CD4-positive, alpha-beta T cell (primary cell): ENCODE measurements at regions of chr3 and their contacts with region 1.

Region 1: DNA sequence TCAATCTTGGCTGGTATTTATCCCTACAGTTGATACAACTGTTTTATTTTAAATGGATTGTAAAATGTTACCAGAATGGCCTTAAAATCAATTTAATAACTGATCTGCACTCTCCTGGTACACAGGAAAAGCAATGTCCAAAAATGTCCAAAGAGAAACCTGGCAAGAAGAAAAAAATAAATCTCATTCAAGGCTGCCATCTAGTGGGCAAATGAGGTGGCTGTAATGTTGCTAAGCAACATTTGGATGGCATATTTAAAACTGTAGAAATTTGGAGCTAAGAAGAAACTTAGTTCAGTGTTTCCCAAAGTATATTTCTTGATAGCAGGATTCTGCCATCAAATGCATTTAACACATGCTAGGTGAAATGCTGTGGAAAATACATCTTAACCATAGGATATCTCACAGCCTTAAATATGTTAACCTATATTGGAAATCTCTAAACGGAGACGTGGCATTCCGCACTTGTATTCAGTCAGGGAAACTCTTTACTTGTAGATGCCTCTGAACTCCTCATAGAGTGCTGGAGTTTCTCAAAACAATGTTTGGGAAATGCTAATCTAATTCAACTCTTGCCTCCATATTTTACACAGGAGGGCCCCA is 216.8 kb downstream of the ERC2 start:
- DNase-seq: peak in 4 of 14 experiments; percentile 5 to 35 (median 14)
- ATAC-seq: no peak
- H3K4me3 ChIP-seq: no peak overlapping the region
- H3K4me3 Mint-ChIP-seq: no peak overlapping the region
- H3K27ac ChIP-seq: no peak overlapping the region
- H3K27ac Mint-ChIP-seq: no peak overlapping the region
- H3K4me1 ChIP-seq: no peaks in the 10 kb centered on the region
- H3K4me1 Mint-ChIP-seq: no peaks in the 10 kb centered on the region
- H3K27me3 ChIP-seq: no peaks in the 10 kb centered on the region
- H3K27me3 Mint-ChIP-seq: peaks cover 6% of the 10 kb centered on the region
- CTCF ChIP-seq: peak; percentile 76

Region 2: DNA sequence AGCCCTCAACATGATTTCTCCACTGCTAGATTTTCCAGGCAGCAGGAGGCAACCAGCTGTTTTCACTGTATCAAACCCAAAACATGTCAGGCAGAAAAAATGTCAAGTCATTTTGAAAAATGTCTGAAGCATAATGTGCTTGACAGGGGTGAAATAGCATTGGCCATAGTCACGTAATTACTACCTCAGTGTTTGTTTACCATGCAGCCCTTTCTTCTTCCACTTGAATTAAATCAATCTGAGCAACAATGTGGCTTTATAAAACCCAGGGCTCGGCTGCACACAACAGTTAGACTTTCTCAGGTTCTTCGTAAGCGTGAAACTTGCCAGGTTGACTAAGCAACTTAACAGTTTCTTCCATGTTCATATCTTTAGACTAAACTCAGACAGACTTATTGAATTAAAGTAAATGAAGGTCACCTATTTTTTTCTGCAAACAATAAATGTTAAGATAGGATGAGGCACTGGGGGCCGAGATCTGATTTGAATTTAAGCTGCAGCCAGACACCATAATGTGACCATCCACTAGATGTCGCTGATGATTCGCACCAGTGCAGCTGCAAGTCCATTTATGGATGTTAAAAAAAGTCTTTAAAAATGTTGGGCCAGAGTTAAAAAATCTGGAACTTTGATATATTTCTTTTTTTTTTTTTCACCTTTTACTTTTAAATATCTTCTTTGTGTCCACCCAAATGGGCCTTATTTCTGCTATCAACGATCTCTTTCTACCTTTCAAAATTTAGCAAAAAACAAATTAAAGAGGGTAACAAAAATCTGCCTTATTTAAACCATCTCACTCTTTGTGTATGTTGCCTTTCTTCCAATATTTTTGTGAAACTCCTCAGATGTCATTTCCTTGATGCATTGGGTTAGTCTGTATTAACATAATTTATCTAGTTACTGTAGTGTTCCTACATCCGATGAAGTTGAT is 1823.2 kb before region 1 on chr3:
- CTCF ChIA-PET with region 1: no interaction called
- POLR2A ChIA-PET with region 1: no interaction called
- intact Hi-C with region 1: loop called in 1 of 2 experiments (anchors 5 kb)
- DNase-seq: peak in 4 of 14 experiments; percentile 11 to 38 (median 23)
- ATAC-seq: no peak
- H3K4me3 ChIP-seq: no peak overlapping the region
- H3K4me3 Mint-ChIP-seq: no peak overlapping the region
- H3K27ac ChIP-seq: no peak overlapping the region
- H3K27ac Mint-ChIP-seq: no peak overlapping the region
- H3K4me1 ChIP-seq: no peaks in the 10 kb centered on the region
- H3K4me1 Mint-ChIP-seq: no peaks in the 10 kb centered on the region
- H3K27me3 ChIP-seq: no peaks in the 10 kb centered on the region
- H3K27me3 Mint-ChIP-seq: peaks cover 10% of the 10 kb centered on the region
- CTCF ChIP-seq: peak; percentile 50

Region 3: DNA sequence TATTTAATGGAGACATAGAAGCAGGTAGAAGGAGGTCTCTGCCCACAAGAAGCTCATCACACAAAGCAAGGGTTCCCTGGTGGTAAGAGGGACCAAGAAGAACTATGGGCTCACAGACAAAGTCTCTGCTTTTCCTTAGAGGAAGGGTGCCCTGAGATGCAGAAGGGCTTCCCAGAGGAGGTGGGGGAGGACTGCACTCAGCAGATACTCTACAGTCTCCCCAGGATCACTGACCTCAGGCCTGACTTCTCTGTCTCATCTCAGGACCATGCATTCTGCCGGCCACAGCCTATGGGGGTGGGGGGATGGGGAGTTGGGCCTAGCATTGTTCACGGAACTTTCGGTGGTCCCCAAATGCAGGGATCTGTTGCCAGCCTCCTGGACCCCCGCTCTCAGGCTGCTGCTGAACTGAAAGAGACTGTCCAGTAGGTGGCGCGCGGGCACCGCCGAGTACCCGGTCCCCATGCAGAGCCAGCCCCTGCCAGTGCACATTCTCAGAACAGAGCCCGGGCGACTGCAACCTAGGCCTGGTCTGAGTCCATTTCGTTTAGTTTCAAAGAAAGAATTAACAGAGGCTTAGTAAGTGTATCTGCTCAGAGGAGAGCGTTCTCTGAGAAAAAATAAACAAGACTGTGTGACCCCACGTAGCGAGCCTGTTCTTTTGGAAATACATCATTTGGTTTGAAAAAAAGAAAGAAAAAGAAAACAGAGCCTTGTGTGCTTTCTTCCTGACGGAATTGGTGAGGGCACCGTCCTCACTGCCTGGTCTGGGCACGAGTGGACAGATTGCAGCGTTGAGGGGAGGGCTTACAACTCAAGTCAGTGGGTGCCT is 1397.7 kb before region 1 on chr3:
- CTCF ChIA-PET with region 1: no interaction called
- POLR2A ChIA-PET with region 1: no interaction called
- intact Hi-C with region 1: loop called in 1 of 2 experiments (anchors 5 kb)
- DNase-seq: peak in 8 of 14 experiments; percentile 1 to 40 (median 16)
- ATAC-seq: no peak
- H3K4me3 ChIP-seq: no peak overlapping the region
- H3K4me3 Mint-ChIP-seq: no peak overlapping the region
- H3K27ac ChIP-seq: no peak overlapping the region
- H3K27ac Mint-ChIP-seq: no peak overlapping the region
- H3K4me1 ChIP-seq: no peaks in the 10 kb centered on the region
- H3K4me1 Mint-ChIP-seq: no peaks in the 10 kb centered on the region
- H3K27me3 ChIP-seq: peaks cover 0 to 3% of the 10 kb centered on the region in 2 experiments
- H3K27me3 Mint-ChIP-seq: peaks cover 18% of the 10 kb centered on the region
- CTCF ChIP-seq: peak; percentile 41

Region 4: GRCh38 chr3:55485211-55485791 is 766.1 kb before region 1 on chr3:
- CTCF ChIA-PET with region 1: no interaction called
- POLR2A ChIA-PET with region 1: no interaction called
- intact Hi-C with region 1: loop called in 1 of 2 experiments (anchors 5 kb)
- DNase-seq: peak in 3 of 14 experiments; percentile 28 to 52 (median 40)
- ATAC-seq: no peak
- H3K4me3 ChIP-seq: no peak overlapping the region
- H3K4me3 Mint-ChIP-seq: peak overlapping the region; percentile 38
- H3K27ac ChIP-seq: no peak overlapping the region
- H3K27ac Mint-ChIP-seq: no peak overlapping the region
- H3K4me1 ChIP-seq: no peaks in the 10 kb centered on the region
- H3K4me1 Mint-ChIP-seq: peaks cover 13% of the 10 kb centered on the region
- H3K27me3 ChIP-seq: peaks cover 73 to 90% of the 10 kb centered on the region in 2 experiments
- H3K27me3 Mint-ChIP-seq: peaks cover 76% of the 10 kb centered on the region
- CTCF ChIP-seq: no peak

Region 5: DNA sequence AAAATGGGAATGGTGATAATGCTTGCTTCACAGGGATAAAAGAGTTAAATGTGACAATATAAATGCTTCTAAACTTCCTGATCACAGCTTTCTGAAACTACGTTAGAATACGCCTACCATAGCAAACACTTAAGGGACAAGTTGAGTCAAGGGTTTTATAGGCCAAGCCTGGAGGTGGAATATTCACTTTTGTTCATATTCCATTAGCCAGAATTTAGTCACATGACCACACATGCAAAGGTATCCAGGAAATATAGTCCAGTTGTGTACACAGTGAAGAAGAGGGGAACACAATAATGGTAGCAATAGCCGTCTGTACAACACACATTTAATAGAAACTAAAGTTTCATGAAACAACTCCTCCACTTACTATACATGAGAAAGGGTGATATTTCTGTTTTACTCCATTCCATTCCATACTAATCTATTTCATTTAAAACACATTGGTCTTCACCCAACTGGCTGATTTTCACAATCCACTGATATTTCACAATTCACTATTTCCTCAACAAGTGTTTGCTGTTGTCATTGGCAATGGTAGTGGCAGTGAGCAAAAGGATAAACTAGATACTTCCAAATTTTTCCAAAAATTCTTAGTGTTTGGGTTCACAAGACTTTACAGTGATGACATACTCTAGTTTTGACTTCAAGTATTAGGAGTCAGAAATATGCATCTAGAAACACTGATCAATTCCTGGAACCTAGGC is 54.0 kb before region 1 on chr3:
- CTCF ChIA-PET with region 1: no interaction called
- POLR2A ChIA-PET with region 1: no interaction called
- intact Hi-C with region 1: no loop called
- DNase-seq: no peak
- ATAC-seq: no peak
- H3K4me3 ChIP-seq: no peak overlapping the region
- H3K4me3 Mint-ChIP-seq: no peak overlapping the region
- H3K27ac ChIP-seq: no peak overlapping the region
- H3K27ac Mint-ChIP-seq: no peak overlapping the region
- H3K4me1 ChIP-seq: no peaks in the 10 kb centered on the region
- H3K4me1 Mint-ChIP-seq: no peaks in the 10 kb centered on the region
- H3K27me3 ChIP-seq: no peaks in the 10 kb centered on the region
- H3K27me3 Mint-ChIP-seq: no peaks in the 10 kb centered on the region
- CTCF ChIP-seq: no peak

Region 6: DNA sequence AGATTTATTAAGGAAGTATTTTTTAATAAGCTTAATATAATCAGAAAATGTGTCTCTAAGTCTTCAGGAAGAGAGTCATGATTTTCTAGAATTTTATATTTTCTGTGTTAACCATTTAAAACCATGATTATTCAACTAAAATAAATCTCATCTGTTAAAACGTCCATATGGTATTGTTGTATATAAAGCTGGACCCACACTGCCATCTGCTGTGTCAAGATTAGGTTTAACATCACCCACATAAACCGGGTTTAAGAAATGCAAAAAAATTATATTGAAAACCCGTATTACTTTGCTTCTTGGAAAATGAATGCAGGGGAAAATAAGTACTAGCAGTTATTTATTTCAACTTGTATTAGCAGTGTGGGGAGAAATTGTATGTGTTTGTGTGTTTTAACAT is 296.0 kb after region 1 on chr3:
- CTCF ChIA-PET with region 1: no interaction called
- POLR2A ChIA-PET with region 1: no interaction called
- intact Hi-C with region 1: no loop called
- DNase-seq: no peak
- ATAC-seq: no peak
- H3K4me3 ChIP-seq: no peak overlapping the region
- H3K4me3 Mint-ChIP-seq: no peak overlapping the region
- H3K27ac ChIP-seq: no peak overlapping the region
- H3K27ac Mint-ChIP-seq: no peak overlapping the region
- H3K4me1 ChIP-seq: no peaks in the 10 kb centered on the region
- H3K4me1 Mint-ChIP-seq: no peaks in the 10 kb centered on the region
- H3K27me3 ChIP-seq: peaks cover 0 to 4% of the 10 kb centered on the region in 2 experiments
- H3K27me3 Mint-ChIP-seq: peaks cover 23% of the 10 kb centered on the region
- CTCF ChIP-seq: no peak